ENCODE measurements at regions of chr6 and their contacts with region 1.

Region 1: DNA sequence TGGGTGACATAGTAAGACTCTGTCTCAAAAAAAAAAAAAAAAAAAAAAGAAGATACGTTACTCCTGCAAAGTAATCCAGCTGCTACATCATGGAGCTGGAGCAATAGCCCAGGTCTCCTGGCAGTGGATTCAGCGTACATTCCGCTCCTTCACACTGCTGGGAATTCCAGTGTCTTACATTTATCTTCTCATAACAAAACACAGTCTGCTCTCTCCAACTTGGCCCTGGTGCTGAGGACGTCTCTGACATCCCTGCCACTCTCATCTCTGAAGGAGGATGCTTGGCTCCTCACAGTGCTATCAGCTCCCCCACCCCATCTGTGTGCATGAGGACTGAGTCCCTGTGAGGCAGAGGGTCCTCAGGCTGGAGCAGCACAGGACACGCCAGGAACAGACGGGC is 529.8 kb downstream of the CD83 start:
- DNase-seq: peak; percentile 90
- H3K4me3 ChIP-seq: no peak overlapping the region
- H3K27ac ChIP-seq: peak overlapping the region in 3 of 4 donors; percentile 24 to 74 (median 70)
- H3K4me1 ChIP-seq: peaks cover 0 to 12% (median 3%) of the 10 kb centered on the region in 4 donors
- H3K27me3 ChIP-seq: no peaks in the 10 kb centered on the region
- CTCF ChIP-seq: no peak
- EP300 ChIP-seq: peak; percentile 78
- POLR2A ChIP-seq: no peak

Region 2: GRCh38 chr6:14540276-14540675 is 107.1 kb before region 1 on chr6:
- intact Hi-C with region 1: no loop called
- DNase-seq: no peak
- H3K4me3 ChIP-seq: no peak overlapping the region
- H3K27ac ChIP-seq: no peak overlapping the region
- H3K4me1 ChIP-seq: peaks cover 4 to 10% (median 8%) of the 10 kb centered on the region in 4 donors
- H3K27me3 ChIP-seq: no peaks in the 10 kb centered on the region
- CTCF ChIP-seq: no peak
- EP300 ChIP-seq: no peak
- POLR2A ChIP-seq: no peak

Region 3: DNA sequence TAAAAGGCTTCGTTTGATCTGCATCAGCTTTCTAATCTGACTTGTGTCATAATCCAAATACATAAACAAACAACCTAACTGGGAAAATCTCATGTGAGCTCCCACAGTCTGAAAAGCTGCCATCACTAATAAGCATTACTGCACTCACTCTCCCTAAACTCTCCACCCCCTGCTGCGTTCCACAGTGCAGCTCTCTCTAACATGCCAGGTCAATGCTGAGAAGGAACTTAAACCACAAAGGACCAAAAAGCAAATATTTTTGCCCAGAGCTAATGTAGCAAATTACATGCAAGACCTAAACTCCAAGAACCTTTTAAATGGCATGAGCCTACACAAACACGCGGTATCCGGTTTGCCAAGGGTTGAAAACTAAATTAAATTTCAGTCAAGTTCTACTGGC is 56.2 kb after region 1 on chr6:
- intact Hi-C with region 1: loop called (anchors 5 kb)
- DNase-seq: no peak
- H3K4me3 ChIP-seq: no peak overlapping the region
- H3K27ac ChIP-seq: no peak overlapping the region
- H3K4me1 ChIP-seq: peaks cover 16 to 27% (median 27%) of the 10 kb centered on the region in 4 donors
- H3K27me3 ChIP-seq: no peaks in the 10 kb centered on the region
- CTCF ChIP-seq: no peak
- EP300 ChIP-seq: no peak
- POLR2A ChIP-seq: no peak

Measured in esophagus muscularis mucosa (tissue), 4 donors.